B cell (primary cell): ENCODE measurements at regions of chr20 and their contacts with region 1.

Region 1: DNA sequence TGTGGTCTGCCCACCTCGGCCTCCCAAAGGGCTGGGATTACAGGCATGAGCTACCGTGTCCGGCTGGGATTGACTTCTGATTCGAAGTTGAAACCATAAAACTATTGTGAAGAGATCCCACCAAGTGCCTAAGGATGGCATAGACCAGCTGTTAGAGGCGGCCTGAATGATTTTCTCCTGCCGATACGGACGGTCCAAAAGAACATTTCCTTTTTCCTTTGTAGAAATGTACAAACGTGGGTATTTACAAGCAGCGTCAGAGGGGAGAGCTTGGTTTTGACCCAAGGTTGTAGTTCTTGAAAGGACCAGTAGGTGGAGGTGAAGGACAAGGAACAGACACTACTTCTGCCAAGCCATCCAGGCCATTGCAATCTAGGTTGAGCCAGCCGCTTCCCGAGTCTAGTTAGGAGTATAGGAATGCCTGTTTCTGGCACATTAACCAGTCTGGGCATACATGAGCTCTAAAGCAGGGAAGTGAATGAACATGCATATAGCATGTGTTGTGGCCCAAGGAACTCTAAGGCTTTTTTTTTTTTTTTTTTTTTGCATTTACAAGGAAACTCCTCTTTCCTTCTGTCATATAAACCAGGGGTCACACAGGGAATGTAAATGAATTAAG is 29.1 kb downstream of the MOCS3 start:
- DNase-seq: peak; percentile 86
- ATAC-seq: peak; percentile 99
- H3K4me3 ChIP-seq: no peak overlapping the region
- H3K4me3 Mint-ChIP-seq: no peak overlapping the region
- H3K27ac ChIP-seq: no peak overlapping the region
- H3K27ac Mint-ChIP-seq: peak overlapping the region; percentile 11
- H3K4me1 ChIP-seq: peaks cover 10 to 11% of the 10 kb centered on the region in 2 donors
- H3K4me1 Mint-ChIP-seq: peaks cover 12% of the 10 kb centered on the region
- H3K27me3 ChIP-seq: peaks cover 0 to 15% (median 4%) of the 10 kb centered on the region in 4 experiments
- H3K27me3 Mint-ChIP-seq: peaks cover 23% of the 10 kb centered on the region
- CTCF ChIP-seq: peak; percentile 87

Region 2: GRCh38 chr20:51009303-51010042 is 21.8 kb after region 1 on chr20:
- CTCF ChIA-PET with region 1: no interaction called
- POLR2A ChIA-PET with region 1: no interaction called
- intact Hi-C with region 1: no loop called
- DNase-seq: no peak
- ATAC-seq: no peak
- H3K4me3 ChIP-seq: no peak overlapping the region
- H3K4me3 Mint-ChIP-seq: no peak overlapping the region
- H3K27ac ChIP-seq: no peak overlapping the region
- H3K27ac Mint-ChIP-seq: no peak overlapping the region
- H3K4me1 ChIP-seq: peaks cover 8 to 9% of the 10 kb centered on the region in 2 donors
- H3K4me1 Mint-ChIP-seq: peaks cover under 1% of the 10 kb centered on the region
- H3K27me3 ChIP-seq: peaks cover 0 to 4% (median 0%) of the 10 kb centered on the region in 4 experiments
- H3K27me3 Mint-ChIP-seq: peaks cover 21% of the 10 kb centered on the region
- CTCF ChIP-seq: no peak

Region 3: DNA sequence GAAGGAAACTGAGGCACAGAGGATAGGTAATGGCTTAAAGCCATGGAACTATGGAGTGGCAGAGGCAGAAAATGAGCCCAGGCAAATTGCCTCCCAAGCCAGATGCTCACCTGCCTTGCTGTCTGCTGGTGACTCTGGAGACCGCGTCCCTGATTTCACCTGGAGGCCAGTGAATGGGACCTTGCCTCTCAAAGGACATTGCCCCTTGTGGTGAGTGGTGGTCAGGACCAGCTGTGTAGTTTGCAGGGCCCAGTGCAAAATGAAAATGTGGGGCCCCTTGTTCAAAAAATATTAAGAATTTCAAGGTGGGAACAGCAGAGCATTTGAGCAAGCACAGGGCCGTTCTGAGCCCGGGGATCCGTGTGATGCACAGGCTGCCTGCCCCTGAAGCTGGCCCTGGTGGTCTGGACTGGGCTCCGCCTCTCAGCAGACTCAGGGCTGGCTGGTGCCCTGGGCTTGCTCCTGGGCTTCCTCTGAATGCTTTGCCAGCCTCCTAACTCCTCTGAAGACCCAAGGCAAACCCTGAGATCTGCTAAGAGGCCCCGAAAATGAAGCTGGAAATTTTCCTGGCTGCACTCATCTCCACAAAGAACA is 55.0 kb after region 1 on chr20:
- CTCF ChIA-PET with region 1: no interaction called
- POLR2A ChIA-PET with region 1: no interaction called
- intact Hi-C with region 1: no loop called
- DNase-seq: no peak
- ATAC-seq: no peak
- H3K4me3 ChIP-seq: no peak overlapping the region
- H3K4me3 Mint-ChIP-seq: no peak overlapping the region
- H3K27ac ChIP-seq: no peak overlapping the region
- H3K27ac Mint-ChIP-seq: no peak overlapping the region
- H3K4me1 ChIP-seq: peaks cover 0 to 3% of the 10 kb centered on the region in 2 donors
- H3K4me1 Mint-ChIP-seq: no peaks in the 10 kb centered on the region
- H3K27me3 ChIP-seq: peaks cover 0 to 2% (median 0%) of the 10 kb centered on the region in 4 experiments
- H3K27me3 Mint-ChIP-seq: peaks cover 6% of the 10 kb centered on the region
- CTCF ChIP-seq: no peak

Region 4: GRCh38 chr20:51306503-51307358 is 319.0 kb after region 1 on chr20:
- CTCF ChIA-PET with region 1: interaction called, 314 read pairs
- POLR2A ChIA-PET with region 1: no interaction called
- intact Hi-C with region 1: loop called (anchors 1 kb)
- DNase-seq: peak; percentile 84
- ATAC-seq: peak; percentile 94
- H3K4me3 ChIP-seq: no peak overlapping the region
- H3K4me3 Mint-ChIP-seq: no peak overlapping the region
- H3K27ac ChIP-seq: no peak overlapping the region
- H3K27ac Mint-ChIP-seq: no peak overlapping the region
- H3K4me1 ChIP-seq: peaks cover 4 to 9% of the 10 kb centered on the region in 2 donors
- H3K4me1 Mint-ChIP-seq: peaks cover 6% of the 10 kb centered on the region
- H3K27me3 ChIP-seq: peaks cover 0 to 7% (median 0%) of the 10 kb centered on the region in 4 experiments
- H3K27me3 Mint-ChIP-seq: peaks cover 26% of the 10 kb centered on the region
- CTCF ChIP-seq: peak; percentile 87

Region 5: DNA sequence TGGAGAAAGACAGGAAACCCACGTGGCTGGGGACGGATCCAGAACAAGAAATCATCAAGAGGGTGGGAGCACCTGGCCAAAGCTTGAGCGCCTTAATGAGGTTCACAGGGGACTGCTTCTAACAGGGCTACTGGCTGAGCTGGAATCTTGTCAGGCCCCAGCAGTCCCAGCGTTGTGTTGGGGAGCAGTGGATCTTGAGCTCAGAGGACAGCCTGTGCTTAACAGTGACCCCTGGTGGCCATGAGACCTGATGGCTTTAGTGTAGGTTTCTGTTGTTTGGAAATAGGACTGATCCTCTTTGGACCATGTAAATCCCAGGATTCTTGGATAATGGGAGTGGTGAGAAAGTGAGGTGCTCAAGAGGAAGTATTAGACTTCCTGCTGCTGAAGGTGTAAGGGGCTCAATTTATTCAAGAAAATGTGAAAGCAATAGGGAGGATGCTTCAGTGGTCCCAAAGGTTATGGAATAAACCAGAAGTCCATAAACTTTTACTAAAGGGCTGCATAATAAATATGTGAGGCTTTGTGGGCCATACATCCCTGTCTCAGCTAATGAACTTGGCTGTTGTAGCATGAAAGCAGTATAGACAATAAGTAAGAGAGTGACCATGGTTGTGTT is 338.6 kb after region 1 on chr20:
- CTCF ChIA-PET with region 1: interaction called, 22 read pairs
- POLR2A ChIA-PET with region 1: no interaction called
- intact Hi-C with region 1: no loop called
- DNase-seq: peak; percentile 71
- ATAC-seq: no peak
- H3K4me3 ChIP-seq: no peak overlapping the region
- H3K4me3 Mint-ChIP-seq: no peak overlapping the region
- H3K27ac ChIP-seq: no peak overlapping the region
- H3K27ac Mint-ChIP-seq: no peak overlapping the region
- H3K4me1 ChIP-seq: no peaks in the 10 kb centered on the region
- H3K4me1 Mint-ChIP-seq: no peaks in the 10 kb centered on the region
- H3K27me3 ChIP-seq: peaks cover 0 to 6% (median 1%) of the 10 kb centered on the region in 4 experiments
- H3K27me3 Mint-ChIP-seq: peaks cover 26% of the 10 kb centered on the region
- CTCF ChIP-seq: no peak

Region 6: DNA sequence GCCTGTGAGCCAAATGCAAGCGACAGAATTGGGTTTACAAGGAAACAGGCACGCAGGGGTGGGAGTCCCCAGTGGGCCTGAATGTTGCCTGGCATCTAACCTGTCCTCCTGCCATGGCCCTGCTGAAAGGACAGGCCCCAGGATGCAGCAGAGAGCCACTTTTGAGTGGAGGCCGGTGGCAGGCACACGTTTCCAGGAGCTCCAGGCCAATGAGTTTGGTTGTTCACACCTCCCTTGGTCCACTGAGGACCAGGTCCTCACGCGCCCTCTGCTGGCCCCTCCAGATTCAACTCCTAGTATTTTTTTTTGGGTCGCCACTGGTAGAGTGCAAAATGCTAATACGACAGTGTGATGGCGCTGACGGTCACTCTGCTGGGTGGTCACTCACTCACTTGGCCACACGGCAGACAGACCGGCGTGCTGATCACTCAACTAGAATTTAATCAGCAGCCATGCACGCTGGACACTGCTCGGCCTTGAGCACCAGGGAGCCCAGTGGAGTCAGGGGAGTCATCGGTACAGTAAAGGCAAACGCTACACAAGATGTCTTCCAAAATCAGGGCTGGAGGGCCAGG is 636.5 kb after region 1 on chr20:
- CTCF ChIA-PET with region 1: interaction called, 34 read pairs
- POLR2A ChIA-PET with region 1: no interaction called
- intact Hi-C with region 1: loop called (anchors 1 kb)
- DNase-seq: peak; percentile 72
- ATAC-seq: peak; percentile 67
- H3K4me3 ChIP-seq: no peak overlapping the region
- H3K4me3 Mint-ChIP-seq: no peak overlapping the region
- H3K27ac ChIP-seq: no peak overlapping the region
- H3K27ac Mint-ChIP-seq: no peak overlapping the region
- H3K4me1 ChIP-seq: peaks cover 0 to 2% of the 10 kb centered on the region in 2 donors
- H3K4me1 Mint-ChIP-seq: no peaks in the 10 kb centered on the region
- H3K27me3 ChIP-seq: peaks cover 0 to 3% (median 0%) of the 10 kb centered on the region in 4 experiments
- H3K27me3 Mint-ChIP-seq: peaks cover 12% of the 10 kb centered on the region
- CTCF ChIP-seq: peak; percentile 77

Region 7: GRCh38 chr20:52083627-52084232 is 1096.0 kb after region 1 on chr20:
- CTCF ChIA-PET with region 1: interaction called, 5 read pairs
- POLR2A ChIA-PET with region 1: no interaction called
- intact Hi-C with region 1: loop called (anchors 10 kb)
- DNase-seq: no peak
- ATAC-seq: no peak
- H3K4me3 ChIP-seq: no peak overlapping the region
- H3K4me3 Mint-ChIP-seq: no peak overlapping the region
- H3K27ac ChIP-seq: no peak overlapping the region
- H3K27ac Mint-ChIP-seq: no peak overlapping the region
- H3K4me1 ChIP-seq: no peaks in the 10 kb centered on the region
- H3K4me1 Mint-ChIP-seq: no peaks in the 10 kb centered on the region
- H3K27me3 ChIP-seq: no peaks in the 10 kb centered on the region
- H3K27me3 Mint-ChIP-seq: no peaks in the 10 kb centered on the region
- CTCF ChIP-seq: no peak